A549 (cell line): ENCODE measurements at regions of chr1 and their contacts with region 1.

Region 1: DNA sequence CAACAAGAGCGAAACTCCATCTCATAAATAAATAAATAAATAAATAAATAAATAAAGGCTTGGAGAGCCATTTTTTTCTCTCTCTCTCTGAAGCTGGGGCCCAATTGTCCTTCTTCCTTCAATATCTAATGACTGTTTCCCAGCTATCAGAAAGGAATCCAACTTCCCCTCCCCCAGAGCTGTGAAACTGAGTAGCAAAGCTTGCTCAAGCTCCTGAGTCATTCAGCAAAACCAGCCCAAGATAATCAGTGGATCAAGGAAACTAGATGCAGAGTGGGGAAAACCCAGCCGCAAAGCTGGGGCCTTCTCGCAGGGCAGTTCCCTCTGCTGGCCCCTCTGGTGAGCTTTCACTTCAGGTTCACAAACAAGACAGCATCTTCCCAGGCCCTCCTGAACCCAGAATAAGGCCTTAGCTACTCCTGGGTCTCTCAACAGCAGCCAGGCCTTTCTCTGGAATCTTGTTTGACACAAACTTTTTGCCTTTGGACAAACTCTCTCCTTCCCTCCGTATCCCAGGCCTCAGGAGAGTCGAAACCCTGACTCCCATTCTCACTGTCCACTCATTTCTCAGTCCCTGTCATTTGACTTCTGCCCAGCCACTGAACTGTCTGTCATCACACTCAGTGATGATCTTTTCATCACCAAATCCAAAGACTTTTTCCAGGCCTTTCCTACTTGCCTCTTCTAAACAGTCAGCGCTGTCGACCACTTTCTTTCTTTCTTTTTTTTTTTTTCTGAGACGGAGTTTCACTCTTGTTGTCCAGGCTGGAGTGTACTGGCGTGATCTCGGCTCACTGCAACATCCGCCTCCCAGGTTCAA is 18.0 kb upstream of the PTP4A2 start:
- DNase-seq: peak; percentile 71 to 95
- ATAC-seq: peak; percentile 82 to 83
- H3K4me3 ChIP-seq: no peak overlapping the region
- H3K27ac ChIP-seq: peak overlapping the region; percentile 98 to 99
- H3K4me1 ChIP-seq: peaks cover 62% of the 10 kb centered on the region
- CTCF ChIP-seq: 0 out of 3 replicates have a peak, but pooled peaks have one; percentile 17
- EP300 ChIP-seq: peak; percentile 29 to 68; a peak in 2 of 5 replicates
- POLR2A ChIP-seq: no peak
- RAD21 ChIP-seq: peak; percentile 32 to 55; a peak in 3 of 5 replicates

Region 2: DNA sequence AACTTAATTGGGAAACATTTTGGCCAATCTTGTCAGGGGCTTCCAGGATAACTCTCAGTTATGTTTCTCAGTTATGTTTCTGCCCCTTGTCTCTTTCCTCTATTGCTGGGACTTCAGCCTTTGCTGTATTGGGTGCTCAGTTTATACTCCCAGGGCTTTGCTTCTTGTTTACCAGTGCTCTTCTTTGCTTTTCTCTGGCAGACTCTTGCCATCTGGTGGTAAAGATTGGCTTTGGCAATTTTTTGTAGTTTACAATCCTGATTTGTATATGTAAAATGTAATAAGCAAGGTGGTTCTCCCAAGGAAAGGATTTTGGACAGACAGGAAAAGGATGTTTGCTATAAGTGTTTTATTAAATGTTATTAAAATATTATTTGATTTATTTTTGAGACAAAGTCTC is 621.1 kb before region 1 on chr1:
- CTCF ChIA-PET with region 1: no interaction called
- POLR2A ChIA-PET with region 1: no interaction called
- DNase-seq: peak; percentile 7 to 45
- ATAC-seq: peak in 1 of 2 experiments; percentile 61; a peak in 3 of 6 replicates
- H3K4me3 ChIP-seq: no peak overlapping the region
- H3K27ac ChIP-seq: no peak overlapping the region
- H3K4me1 ChIP-seq: no peaks in the 10 kb centered on the region
- CTCF ChIP-seq: peak; percentile 60
- EP300 ChIP-seq: no peak
- POLR2A ChIP-seq: no peak
- RAD21 ChIP-seq: peak; percentile 61 to 62

Region 3: DNA sequence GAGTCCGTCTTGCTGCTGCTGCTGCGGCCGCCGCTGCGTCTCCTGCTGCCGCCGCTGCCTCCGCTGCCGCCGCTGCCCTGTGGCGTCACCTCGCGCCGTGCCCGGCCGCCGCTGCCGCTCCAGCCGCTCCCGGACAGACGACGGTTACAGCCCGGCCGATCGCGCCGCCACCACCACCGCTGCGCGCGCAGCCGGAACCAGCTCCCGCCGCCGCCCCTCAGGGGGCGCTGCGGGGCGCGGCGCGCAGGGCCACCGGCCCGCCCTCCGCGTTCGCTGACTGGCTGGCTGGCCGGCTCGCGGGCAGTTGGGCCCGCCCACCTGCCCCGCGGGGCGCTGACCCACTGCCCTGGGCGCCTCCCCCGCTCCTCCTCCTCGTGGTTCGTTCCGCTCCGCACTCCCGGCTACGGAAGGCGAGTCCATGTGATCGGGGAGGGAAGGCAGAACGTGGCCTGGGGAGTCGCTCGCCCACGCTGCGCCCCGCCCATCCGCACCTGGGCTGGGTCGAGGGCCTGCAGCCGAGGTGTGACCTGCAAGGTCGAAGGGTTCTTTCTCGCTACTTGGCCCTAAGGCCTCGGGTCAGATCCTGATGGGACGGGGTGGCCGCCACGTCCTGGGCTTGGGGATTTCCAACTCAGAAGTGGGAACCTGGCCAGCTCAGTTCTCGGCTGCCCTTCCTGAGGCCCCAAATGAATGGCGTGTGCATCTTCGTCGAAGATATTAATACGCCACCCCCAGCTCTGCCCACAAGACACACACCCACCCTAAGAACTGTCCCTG is 17.8 kb before region 1 on chr1 and contains the start of gene PTP4A2:
- CTCF ChIA-PET with region 1: interaction called, 518 read pairs
- POLR2A ChIA-PET with region 1: interaction called, 110 read pairs
- DNase-seq: peak; percentile 79 to 96
- ATAC-seq: peak; percentile 79 to 82
- H3K4me3 ChIP-seq: peak within 1 kb of the TSS; percentile 83
- H3K27ac ChIP-seq: peak within 1 kb of the TSS; percentile 99
- H3K4me1 ChIP-seq: peaks cover 66% of the 10 kb centered on the region
- CTCF ChIP-seq: peak; percentile 57
- EP300 ChIP-seq: no peak
- POLR2A ChIP-seq: peak; percentile 45
- RAD21 ChIP-seq: no peak
- polyA plus RNA-seq, gene PTP4A2: 504 and 563 TPM in 2 replicates

Region 4: GRCh38 chr1:31944205-31945089 is 11.7 kb before region 1 on chr1:
- CTCF ChIA-PET with region 1: interaction called, 518 read pairs
- POLR2A ChIA-PET with region 1: interaction called, 110 read pairs
- DNase-seq: peak; percentile 77 to 97
- ATAC-seq: peak; percentile 90 to 92
- H3K4me3 ChIP-seq: peak overlapping the region; percentile 44
- H3K27ac ChIP-seq: peak overlapping the region; percentile 99
- H3K4me1 ChIP-seq: peaks cover 52% of the 10 kb centered on the region
- CTCF ChIP-seq: no peak
- EP300 ChIP-seq: peak; percentile 32 to 69; a peak in 2 of 5 replicates
- POLR2A ChIP-seq: peak; percentile 35; the same call in 1 of the 2 replicates
- RAD21 ChIP-seq: no peak; a peak in 1 of 5 replicates

Region 5: DNA sequence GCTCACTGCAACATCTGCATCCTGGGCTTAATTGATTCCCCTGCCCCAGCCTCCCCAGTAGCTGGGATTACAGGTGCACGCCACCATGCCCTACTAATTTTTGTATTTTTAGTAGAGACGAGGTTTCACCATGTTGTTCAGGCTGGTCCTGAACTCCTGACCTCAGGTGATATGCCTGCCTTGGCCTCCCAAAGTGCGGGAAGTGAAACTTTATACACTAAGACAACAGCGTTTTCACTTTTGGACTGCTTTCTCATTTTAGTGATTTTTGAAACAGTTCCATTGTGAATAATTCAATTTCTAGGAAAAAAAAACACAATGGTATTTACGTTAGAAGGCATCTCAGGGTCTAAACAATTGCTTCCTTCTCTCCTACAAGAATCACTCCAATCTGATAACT is 45.7 kb after region 1 on chr1:
- CTCF ChIA-PET with region 1: no interaction called
- POLR2A ChIA-PET with region 1: no interaction called
- DNase-seq: no peak
- ATAC-seq: no peak
- H3K4me3 ChIP-seq: no peak overlapping the region
- H3K27ac ChIP-seq: no peak overlapping the region
- H3K4me1 ChIP-seq: peaks cover 6% of the 10 kb centered on the region; the same call in 1 of the 3 replicates
- CTCF ChIP-seq: no peak
- EP300 ChIP-seq: no peak
- POLR2A ChIP-seq: no peak
- RAD21 ChIP-seq: no peak